ENCODE measurements at regions of chr5 and their contacts with region 1.

Region 1: DNA sequence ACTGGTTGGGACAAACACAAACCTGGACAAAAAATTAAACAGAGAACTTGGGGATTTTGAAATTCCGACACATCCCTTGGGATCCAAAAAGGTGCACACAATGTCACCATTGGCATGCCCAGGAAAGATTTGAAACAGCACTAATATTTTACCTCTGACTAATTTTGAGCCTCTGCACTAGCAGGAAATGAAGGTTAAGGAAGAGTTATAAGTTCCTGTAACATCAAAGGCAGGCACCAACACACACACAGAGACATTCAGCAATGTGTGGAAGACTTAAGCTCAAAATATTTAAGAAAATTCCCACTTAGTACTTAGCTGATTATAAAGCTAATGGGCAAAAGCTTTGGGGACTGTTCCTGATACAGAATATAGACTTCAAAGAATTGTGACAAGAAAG is 247.0 kb downstream of the CDH9 start:
- DNase-seq: no peak
- H3K4me3 Mint-ChIP-seq: no peak overlapping the region
- H3K27ac Mint-ChIP-seq: no peak overlapping the region
- H3K4me1 Mint-ChIP-seq: no peaks in the 10 kb centered on the region
- H3K27me3 Mint-ChIP-seq: no peaks in the 10 kb centered on the region

Region 2: GRCh38 chr5:26802944-26803343 is 11.5 kb after region 1 on chr5:
- intact Hi-C with region 1: loop called (anchors 1 kb)
- DNase-seq: no peak
- H3K4me3 Mint-ChIP-seq: no peak overlapping the region
- H3K27ac Mint-ChIP-seq: no peak overlapping the region
- H3K4me1 Mint-ChIP-seq: no peaks in the 10 kb centered on the region
- H3K27me3 Mint-ChIP-seq: no peaks in the 10 kb centered on the region

Region 3: DNA sequence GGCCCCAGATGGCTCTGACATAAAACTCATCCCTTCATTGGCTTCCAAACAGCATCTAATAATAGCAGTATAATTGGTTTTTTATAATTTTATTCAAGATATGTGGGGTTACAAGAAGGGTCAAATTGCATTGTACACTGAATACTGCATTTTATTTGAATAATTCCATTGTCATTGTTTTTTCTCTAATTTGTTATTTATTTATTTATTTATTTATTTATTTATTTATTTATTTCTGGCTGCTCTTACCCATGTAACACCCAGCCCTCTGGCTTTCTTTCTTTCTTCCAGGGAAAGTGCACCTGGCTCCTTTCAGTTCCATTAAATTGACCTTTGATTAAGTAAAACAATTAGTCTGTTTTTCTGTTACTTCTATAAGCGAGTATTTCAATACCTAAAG is 36.9 kb after region 1 on chr5:
- intact Hi-C with region 1: loop called (anchors 1 kb)
- DNase-seq: no peak
- H3K4me3 Mint-ChIP-seq: no peak overlapping the region
- H3K27ac Mint-ChIP-seq: no peak overlapping the region
- H3K4me1 Mint-ChIP-seq: no peaks in the 10 kb centered on the region
- H3K27me3 Mint-ChIP-seq: no peaks in the 10 kb centered on the region